Common myeloid progenitor, CD34-positive (primary cell): ENCODE measurements at regions of chr18 and their contacts with region 1.

Region 1: GRCh38 chr18:24600076-24600654 is 139.7 kb downstream of the HRH4 start:
- DNase-seq: peak; percentile 39 to 65 (median 59)
- H3K4me3 ChIP-seq: no peak overlapping the region
- H3K27ac ChIP-seq: no peak overlapping the region
- H3K4me1 ChIP-seq: no peaks in the 10 kb centered on the region
- H3K27me3 ChIP-seq: no peaks in the 10 kb centered on the region

Region 2: DNA sequence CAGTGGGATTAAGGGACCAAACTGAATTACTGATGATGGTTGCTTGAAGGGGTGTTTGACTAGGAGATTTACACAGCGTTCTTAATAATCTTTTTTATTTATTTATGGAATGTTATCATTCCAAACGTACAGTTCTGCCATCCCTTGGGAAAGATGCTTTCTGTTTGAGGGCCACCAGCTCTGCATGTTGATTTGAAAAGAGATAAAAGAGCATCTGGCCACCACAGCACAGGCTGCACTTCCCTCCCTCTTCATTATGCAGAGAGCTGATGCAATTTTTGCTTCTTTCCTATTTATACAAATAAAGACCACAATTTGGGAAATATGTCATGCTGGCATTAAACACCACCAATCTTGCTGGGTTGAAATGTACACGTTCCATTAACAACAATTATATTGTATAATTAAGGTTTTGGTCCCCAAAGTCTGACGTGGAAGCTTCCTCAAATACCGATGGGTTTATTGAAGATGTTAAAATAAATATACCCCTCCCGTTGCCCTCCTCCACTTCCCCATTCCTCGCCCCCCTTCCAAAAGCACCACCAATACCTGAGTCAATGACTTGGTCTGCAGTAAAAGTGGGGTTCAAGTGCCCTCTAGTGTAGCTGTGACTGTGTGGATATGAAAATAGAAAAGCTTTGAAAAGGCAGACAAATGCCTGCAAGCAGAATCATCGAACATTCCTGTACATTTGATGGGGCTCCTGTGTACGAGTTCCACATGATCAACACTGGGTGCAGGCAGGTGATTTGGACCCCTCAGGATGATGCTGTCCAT is 72.2 kb after region 1 on chr18:
- CTCF ChIA-PET with region 1: interaction called, 10 read pairs
- POLR2A ChIA-PET with region 1: no interaction called
- DNase-seq: peak; percentile 52 to 80 (median 75)
- H3K4me3 ChIP-seq: no peak overlapping the region
- H3K27ac ChIP-seq: no peak overlapping the region
- H3K4me1 ChIP-seq: peaks cover 0 to 5% (median 2%) of the 10 kb centered on the region in 4 experiments
- H3K27me3 ChIP-seq: no peaks in the 10 kb centered on the region

Region 3: GRCh38 chr18:24726727-24727492 is 126.7 kb after region 1 on chr18:
- CTCF ChIA-PET with region 1: interaction called, 31 read pairs
- POLR2A ChIA-PET with region 1: no interaction called
- DNase-seq: peak; percentile 77 to 89 (median 82)
- H3K4me3 ChIP-seq: no peak overlapping the region
- H3K27ac ChIP-seq: no peak overlapping the region
- H3K4me1 ChIP-seq: peaks cover 0 to 2% (median 0%) of the 10 kb centered on the region in 4 experiments
- H3K27me3 ChIP-seq: peaks cover 0 to 4% (median 0%) of the 10 kb centered on the region in 5 experiments

Region 4: GRCh38 chr18:24731981-24732380 is 131.8 kb after region 1 on chr18:
- CTCF ChIA-PET with region 1: interaction called, 31 read pairs
- POLR2A ChIA-PET with region 1: no interaction called
- DNase-seq: no peak
- H3K4me3 ChIP-seq: no peak overlapping the region
- H3K27ac ChIP-seq: no peak overlapping the region
- H3K4me1 ChIP-seq: peaks cover 0 to 2% (median 0%) of the 10 kb centered on the region in 4 experiments
- H3K27me3 ChIP-seq: peaks cover 0 to 4% (median 0%) of the 10 kb centered on the region in 5 experiments